PC-9 (cell line): ENCODE measurements at regions of chr11 and their contacts with region 1.

Region 1: GRCh38 chr11:90453525-90453924 is 230.7 kb upstream of the CHORDC1 start:
- DNase-seq: no peak
- H3K4me3 ChIP-seq: no peak overlapping the region
- H3K27ac ChIP-seq: no peak overlapping the region
- H3K4me1 ChIP-seq: no peaks in the 10 kb centered on the region
- H3K27me3 ChIP-seq: no peaks in the 10 kb centered on the region
- CTCF ChIP-seq: no peak

Region 2: DNA sequence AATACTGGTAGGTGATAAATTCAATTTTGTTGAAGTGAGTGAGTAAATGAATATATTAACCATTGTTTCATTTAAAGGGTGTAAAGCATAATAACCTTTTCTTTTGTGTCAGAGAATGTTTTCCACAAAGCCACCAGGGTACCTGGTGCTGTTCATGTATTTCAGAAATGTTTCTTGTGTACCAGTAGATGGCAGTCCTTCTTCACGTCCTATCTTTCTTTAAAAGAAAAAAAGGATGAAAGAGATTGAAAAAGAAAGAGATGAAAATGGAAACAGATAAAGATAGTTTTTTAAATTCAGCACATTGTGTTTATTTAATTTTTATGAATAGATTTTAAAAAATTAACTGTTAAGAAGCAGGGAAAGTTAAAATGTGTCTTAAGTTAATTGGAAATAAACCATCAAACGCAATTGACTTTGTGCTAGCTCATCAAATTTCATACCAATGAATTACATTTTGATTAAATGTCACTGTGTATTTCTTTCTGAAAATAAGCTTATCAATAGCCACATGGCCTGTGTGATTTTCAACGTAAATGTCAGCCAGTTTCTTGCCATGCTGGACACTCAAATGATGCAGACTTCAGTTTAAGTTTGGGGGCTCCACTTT is 165.2 kb before region 1 on chr11:
- CTCF ChIA-PET with region 1: no interaction called
- POLR2A ChIA-PET with region 1: no interaction called
- intact Hi-C with region 1: loop called (anchors 5 kb)
- DNase-seq: no peak
- H3K4me3 ChIP-seq: no peak overlapping the region
- H3K27ac ChIP-seq: no peak overlapping the region
- H3K4me1 ChIP-seq: no peaks in the 10 kb centered on the region
- H3K27me3 ChIP-seq: no peaks in the 10 kb centered on the region
- CTCF ChIP-seq: peak; percentile 79